ENCODE measurements at regions of chr1 and their contacts with region 1.

Region 1: DNA sequence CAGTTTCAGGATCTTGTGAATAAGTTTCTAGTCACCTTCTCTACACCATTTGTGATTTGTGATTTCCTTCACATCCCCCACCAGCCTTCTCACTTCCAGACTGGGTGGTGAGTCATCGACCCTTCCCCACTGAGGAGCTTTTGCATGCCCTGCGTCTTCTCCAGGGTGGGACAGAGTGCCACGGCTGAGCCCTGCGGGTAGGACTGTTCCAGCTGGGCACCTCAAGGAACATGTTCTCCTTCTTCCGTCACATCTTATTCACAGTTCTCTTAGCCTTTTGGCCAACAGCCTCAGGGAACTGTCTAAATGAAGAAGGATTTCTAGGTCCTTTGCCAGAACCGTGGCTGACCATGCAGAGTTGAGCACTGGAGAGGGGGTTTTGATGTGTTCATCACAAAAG is 116.5 kb downstream of the TMEM53 start:
- DNase-seq: no peak
- CTCF ChIP-seq: no peak

Region 2: DNA sequence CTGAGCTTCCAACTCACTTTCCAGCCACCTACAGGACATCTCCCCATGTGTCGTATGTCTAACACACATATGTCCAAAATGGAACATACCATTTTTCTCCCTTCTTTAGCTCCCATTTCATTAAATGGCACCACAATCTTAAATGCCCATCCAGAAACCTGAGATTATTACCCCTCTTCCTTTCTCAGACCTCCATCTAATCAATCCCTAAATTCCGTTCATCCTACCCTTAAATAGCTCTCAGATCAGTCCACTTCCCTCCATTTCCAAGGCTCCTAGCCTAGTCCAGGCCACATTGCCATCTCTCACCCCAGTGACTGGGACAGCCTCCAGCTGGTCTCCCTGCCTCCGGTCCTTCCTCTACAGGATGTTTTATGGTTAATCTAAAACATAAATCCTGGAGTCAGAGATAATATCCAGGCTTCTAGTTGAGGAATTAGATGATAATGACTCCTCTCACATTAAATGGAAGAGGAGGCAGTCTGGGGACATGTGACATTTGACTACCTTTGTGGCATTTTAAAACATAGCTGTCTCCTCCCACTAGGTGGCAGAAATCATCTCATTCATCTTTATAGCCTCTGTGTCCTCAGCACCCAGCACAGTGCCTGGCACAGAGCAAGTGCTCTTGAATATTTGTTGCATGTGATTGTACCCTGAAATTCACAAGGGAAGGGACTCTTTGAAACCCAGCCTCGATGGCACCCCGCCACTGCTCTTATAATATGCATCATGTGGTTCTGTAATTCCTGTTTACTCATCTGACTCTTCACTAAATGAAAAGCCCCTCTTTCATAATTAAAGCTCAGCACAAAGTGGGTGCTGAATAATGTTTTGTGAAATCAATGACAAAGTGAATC is 14.2 kb after region 1 on chr1:
- CTCF ChIA-PET with region 1: interaction called, 29 read pairs
- POLR2A ChIA-PET with region 1: no interaction called
- DNase-seq: peak; percentile 62
- CTCF ChIP-seq: peak; percentile 54

Measured in GM10248 (cell line).